K562 (cell line): ENCODE measurements at regions of chr13 and their contacts with region 1.

Region 1: GRCh38 chr13:59458908-59459579 is 704.7 kb downstream of the DIAPH3 start:
- DNase-seq: no peak
- ATAC-seq: no peak
- H3K4me3 ChIP-seq: no peak overlapping the region
- H3K27ac ChIP-seq: no peak overlapping the region
- H3K4me1 ChIP-seq: peaks cover 4 to 6% of the 10 kb centered on the region in 2 experiments; a peak in 3 of 5 replicates
- H3K27me3 ChIP-seq: no peaks in the 10 kb centered on the region
- CTCF ChIP-seq: no peak
- EP300 ChIP-seq: no peak
- POLR2A ChIP-seq: no peak
- RAD21 ChIP-seq: no peak

Region 2: GRCh38 chr13:59337070-59337469 is 122.0 kb before region 1 on chr13:
- CTCF ChIA-PET with region 1: no interaction called
- POLR2A ChIA-PET with region 1: no interaction called
- in situ Hi-C with region 1: no loop called
- intact Hi-C with region 1: no loop called
- DNase-seq: no peak
- ATAC-seq: no peak
- H3K4me3 ChIP-seq: no peak overlapping the region
- H3K27ac ChIP-seq: no peak overlapping the region
- H3K4me1 ChIP-seq: no peaks in the 10 kb centered on the region
- H3K27me3 ChIP-seq: no peaks in the 10 kb centered on the region; a peak in 1 of 5 replicates
- CTCF ChIP-seq: no peak
- EP300 ChIP-seq: no peak
- POLR2A ChIP-seq: no peak
- RAD21 ChIP-seq: no peak

Region 3: DNA sequence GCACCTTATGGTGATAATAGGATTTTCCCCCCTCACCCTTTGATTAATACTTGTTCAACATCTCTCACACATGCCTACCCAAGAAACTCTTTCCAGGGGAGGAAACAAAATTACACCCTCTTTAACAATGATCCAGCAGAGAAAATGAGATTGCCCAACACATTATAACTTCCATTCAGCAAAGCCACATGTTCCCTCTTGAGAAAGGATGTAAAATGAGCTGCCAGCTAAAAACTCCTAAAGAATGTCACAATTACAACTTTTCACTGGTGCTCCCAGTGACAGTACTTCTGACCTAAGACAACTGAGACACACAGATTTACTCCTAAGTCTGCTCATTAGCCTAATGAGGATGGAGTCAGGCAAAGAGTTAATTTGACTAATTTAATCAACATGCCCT is 83.3 kb after region 1 on chr13:
- CTCF ChIA-PET with region 1: no interaction called
- POLR2A ChIA-PET with region 1: interaction called, 3 read pairs
- in situ Hi-C with region 1: no loop called
- intact Hi-C with region 1: loop called (anchors 2 kb)
- DNase-seq: no peak
- ATAC-seq: no peak
- H3K4me3 ChIP-seq: no peak overlapping the region
- H3K27ac ChIP-seq: no peak overlapping the region
- H3K4me1 ChIP-seq: no peaks in the 10 kb centered on the region; a peak in 1 of 5 replicates
- H3K27me3 ChIP-seq: no peaks in the 10 kb centered on the region
- CTCF ChIP-seq: no peak
- EP300 ChIP-seq: no peak
- POLR2A ChIP-seq: no peak
- RAD21 ChIP-seq: no peak

Region 4: GRCh38 chr13:59906413-59907049 is 447.5 kb after region 1 on chr13:
- CTCF ChIA-PET with region 1: no interaction called
- POLR2A ChIA-PET with region 1: no interaction called
- in situ Hi-C with region 1: loop called (anchors 25 kb)
- intact Hi-C with region 1: no loop called
- DNase-seq: peak in 2 of 4 experiments; percentile 2 to 19
- ATAC-seq: 0 out of 3 replicates have a peak, but pooled peaks have one; percentile 57
- H3K4me3 ChIP-seq: no peak overlapping the region
- H3K27ac ChIP-seq: no peak overlapping the region
- H3K4me1 ChIP-seq: no peaks in the 10 kb centered on the region; a peak in 1 of 5 replicates
- H3K27me3 ChIP-seq: no peaks in the 10 kb centered on the region
- CTCF ChIP-seq: peak; percentile 18 to 50 (median 39); a peak in 4 of 6 replicates
- EP300 ChIP-seq: no peak
- POLR2A ChIP-seq: no peak
- RAD21 ChIP-seq: peak; percentile 34 to 35; a peak in 3 of 4 replicates